IMR-90 (cell line): ENCODE measurements at regions of chr12 and their contacts with region 1.

Region 1: GRCh38 chr12:57005980-57006808 is at the start of gene ZBTB39:
- DNase-seq: peak; percentile 35
- ATAC-seq: peak; percentile 80
- H3K4me3 ChIP-seq: peak within 1 kb of the TSS; percentile 98
- H3K27ac ChIP-seq: peak within 1 kb of the TSS; percentile 76
- H3K4me1 ChIP-seq: peaks cover 12% of the 10 kb centered on the region
- H3K27me3 ChIP-seq: no peaks in the 10 kb centered on the region
- CTCF ChIP-seq: peak; percentile 65
- POLR2A ChIP-seq: peak; percentile 46; the same call in 1 of the 2 replicates
- RAD21 ChIP-seq: no peak
- total RNA-seq, gene ZBTB39: 5.2 and 5.3 TPM in 2 replicates

Region 2: DNA sequence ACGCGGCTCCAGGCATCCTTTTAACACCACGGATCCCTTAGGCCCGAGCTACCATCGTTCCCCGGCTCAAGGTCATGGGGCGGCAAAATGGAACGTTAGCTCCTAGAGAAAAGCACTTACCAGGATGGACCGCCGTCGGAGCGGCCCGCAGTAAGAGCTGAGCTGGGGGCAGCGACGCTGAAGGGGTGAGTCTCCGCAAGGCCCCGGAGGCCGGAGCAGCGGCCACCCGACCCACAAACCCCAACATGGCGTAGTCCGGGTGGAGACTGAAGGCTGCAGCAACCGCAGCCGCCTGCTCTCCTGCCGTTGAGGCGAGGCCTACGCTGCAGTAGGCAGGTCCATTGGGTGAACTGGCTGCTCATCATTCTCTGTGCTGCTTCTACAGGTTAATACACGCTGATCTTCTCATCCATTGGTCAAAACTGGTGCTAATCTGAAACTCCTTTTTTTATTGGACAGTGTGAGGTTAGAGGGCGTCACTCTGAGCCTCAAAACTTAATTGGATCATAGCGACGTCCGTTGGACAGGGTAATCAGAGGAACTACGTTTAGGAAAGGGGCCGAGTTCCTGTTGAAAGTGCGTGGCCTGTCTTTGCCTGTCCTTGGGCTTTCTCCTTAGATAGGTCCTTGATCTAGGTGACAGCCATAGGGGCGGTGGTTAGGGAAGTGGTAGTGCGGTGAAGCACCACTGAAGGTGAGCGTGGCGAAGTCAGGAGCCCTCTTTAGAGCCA is 360.3 kb before region 1 on chr12 and contains the start of gene ATP5F1B:
- CTCF ChIA-PET with region 1: no interaction called
- POLR2A ChIA-PET with region 1: no interaction called
- dilution Hi-C with region 1: no loop called
- in situ Hi-C with region 1: no loop called
- intact Hi-C with region 1: loop called (anchors 10 kb)
- DNase-seq: peak; percentile 100
- ATAC-seq: peak; percentile 99
- H3K4me3 ChIP-seq: peak within 1 kb of the TSS; percentile 74
- H3K27ac ChIP-seq: peak within 1 kb of the TSS; percentile 82
- H3K4me1 ChIP-seq: no peaks in the 10 kb centered on the region
- H3K27me3 ChIP-seq: no peaks in the 10 kb centered on the region
- CTCF ChIP-seq: no peak
- POLR2A ChIP-seq: peak; percentile 98
- RAD21 ChIP-seq: no peak
- total RNA-seq, gene ATP5F1B: 795 and 812 TPM in 2 replicates

Region 3: DNA sequence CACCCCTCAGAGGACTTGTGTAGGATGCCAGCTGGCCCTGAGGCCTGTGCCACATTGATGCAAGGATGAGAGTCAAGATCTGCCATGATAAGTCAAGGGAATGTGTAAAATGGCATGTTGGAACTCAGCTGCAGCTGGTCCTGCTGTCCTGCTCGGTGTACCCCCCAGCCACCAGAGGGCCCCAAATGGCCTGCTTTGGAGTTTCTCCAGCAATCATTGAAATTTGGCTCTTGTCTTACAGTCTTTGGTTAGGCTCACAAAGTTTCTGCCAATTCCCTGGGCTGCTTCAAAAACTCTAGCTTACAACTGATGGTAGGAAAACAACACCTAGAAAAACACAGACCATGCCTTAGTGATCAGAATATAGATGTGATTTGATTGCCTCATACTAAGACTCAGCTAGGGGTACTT is 166.3 kb before region 1 on chr12:
- CTCF ChIA-PET with region 1: no interaction called
- POLR2A ChIA-PET with region 1: no interaction called
- dilution Hi-C with region 1: no loop called
- in situ Hi-C with region 1: no loop called
- intact Hi-C with region 1: loop called (anchors 5 kb)
- DNase-seq: peak; percentile 9
- ATAC-seq: peak; percentile 72
- H3K4me3 ChIP-seq: no peak overlapping the region
- H3K27ac ChIP-seq: no peak overlapping the region
- H3K4me1 ChIP-seq: peaks cover 6% of the 10 kb centered on the region
- H3K27me3 ChIP-seq: peaks cover 12% of the 10 kb centered on the region
- CTCF ChIP-seq: peak; percentile 37
- POLR2A ChIP-seq: no peak
- RAD21 ChIP-seq: peak; percentile 45

Region 4: GRCh38 chr12:57111031-57111734 is 105.0 kb after region 1 on chr12 and contains the start of gene STAT6:
- CTCF ChIA-PET with region 1: interaction called, 12 read pairs
- POLR2A ChIA-PET with region 1: no interaction called
- dilution Hi-C with region 1: no loop called
- in situ Hi-C with region 1: loop called (anchors 5 kb)
- intact Hi-C with region 1: loop called (anchors 1 kb)
- DNase-seq: peak; percentile 87
- ATAC-seq: peak; percentile 68
- H3K4me3 ChIP-seq: peak within 1 kb of the TSS; percentile 64
- H3K27ac ChIP-seq: peak within 1 kb of the TSS; percentile 94
- H3K4me1 ChIP-seq: 0 out of 2 replicates have a peak, but pooled peaks cover 2% of the 10 kb centered on the region
- H3K27me3 ChIP-seq: no peaks in the 10 kb centered on the region
- CTCF ChIP-seq: no peak
- POLR2A ChIP-seq: peak; percentile 72
- RAD21 ChIP-seq: no peak
- total RNA-seq, gene STAT6: 38.9 and 43.4 TPM in 2 replicates